Natural killer cell (primary cell): ENCODE measurements at regions of chr19 and their contacts with region 1.

Region 1: DNA sequence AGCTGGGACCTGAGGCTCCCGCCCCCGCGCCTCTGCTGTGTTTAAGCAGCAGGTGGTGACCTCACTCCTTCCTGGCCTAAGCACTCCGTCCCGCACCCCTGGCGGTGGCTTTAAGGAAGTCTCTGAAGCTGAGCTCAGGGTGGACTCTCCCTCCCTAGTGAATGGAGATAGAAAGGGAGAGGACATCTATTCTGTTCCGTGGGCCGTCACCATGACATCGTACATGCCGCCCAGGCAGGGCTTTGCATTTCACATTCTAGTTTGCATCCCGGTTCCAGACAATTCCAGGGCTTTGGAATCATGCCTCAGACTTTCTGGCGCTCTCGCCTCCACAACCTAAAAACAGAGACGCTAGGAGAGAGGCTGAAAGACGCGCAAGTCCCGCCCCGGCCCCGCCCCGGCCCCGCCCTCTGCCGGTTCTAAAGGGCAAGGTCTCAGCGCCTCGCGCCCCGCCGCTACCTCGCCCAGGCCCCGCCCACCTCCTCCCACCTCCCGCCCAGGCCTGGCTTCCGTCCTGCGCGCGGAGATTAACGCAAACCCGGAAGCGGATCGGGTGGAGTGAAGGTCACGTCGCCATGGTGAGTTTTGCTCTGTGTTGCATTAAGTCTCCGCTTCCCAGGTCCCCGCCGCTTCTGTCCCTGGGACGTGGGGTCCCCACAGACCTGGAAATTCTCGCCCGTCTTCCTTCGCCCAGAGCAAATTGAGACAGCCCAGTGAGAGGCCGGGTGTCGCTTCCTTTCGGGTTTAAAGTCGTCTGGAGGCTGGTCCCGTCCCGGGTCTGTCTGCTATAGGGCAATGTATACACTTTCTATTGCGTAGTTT is at the start of gene ZNF808:
- DNase-seq: peak; percentile 88 to 96
- ATAC-seq: peak; percentile 93 to 99 (median 94)
- H3K4me3 ChIP-seq: peak within 1 kb of the TSS; percentile 84
- H3K4me3 Mint-ChIP-seq: peak within 1 kb of the TSS; percentile 99
- H3K27ac ChIP-seq: peak within 1 kb of the TSS; percentile 88
- H3K27ac Mint-ChIP-seq: peak within 1 kb of the TSS; percentile 95 to 99
- H3K4me1 ChIP-seq: peaks cover 22% of the 10 kb centered on the region
- H3K4me1 Mint-ChIP-seq: peaks cover 21 to 22% of the 10 kb centered on the region in 2 donors
- H3K27me3 ChIP-seq: no peaks in the 10 kb centered on the region
- H3K27me3 Mint-ChIP-seq: no peaks in the 10 kb centered on the region
- CTCF ChIP-seq: peak; percentile 52
- total RNA-seq, gene ZNF808: 43.8 to 69.1 (median 49.5) TPM

Region 2: DNA sequence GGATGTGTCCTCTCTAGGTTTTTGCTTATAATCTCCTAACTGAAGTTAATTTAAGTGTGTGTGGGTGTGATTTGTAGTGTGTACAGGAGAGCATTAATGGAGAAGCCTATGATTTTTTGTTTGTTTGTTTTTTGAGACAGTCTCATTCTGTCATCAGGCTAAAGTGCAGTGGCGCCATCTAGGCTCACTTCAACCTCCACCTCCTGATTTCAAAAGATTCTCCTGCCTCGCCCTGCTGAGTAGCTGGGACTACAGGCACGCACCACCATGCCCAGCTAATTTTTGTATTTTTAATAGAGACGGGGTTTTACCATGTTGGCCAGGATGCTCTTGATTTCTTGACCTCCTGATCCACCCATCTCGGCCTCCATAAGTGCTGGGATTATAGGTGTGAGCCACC is 63.4 kb after region 1 on chr19:
- intact Hi-C with region 1: no loop called
- DNase-seq: peak in 1 of 2 donors; percentile 28
- ATAC-seq: no peak
- H3K4me3 ChIP-seq: no peak overlapping the region
- H3K4me3 Mint-ChIP-seq: no peak overlapping the region
- H3K27ac ChIP-seq: no peak overlapping the region
- H3K27ac Mint-ChIP-seq: peak overlapping the region in 1 of 2 donors; percentile 42
- H3K4me1 ChIP-seq: no peaks in the 10 kb centered on the region
- H3K4me1 Mint-ChIP-seq: peaks cover 0 to 9% of the 10 kb centered on the region in 2 donors
- H3K27me3 ChIP-seq: no peaks in the 10 kb centered on the region
- H3K27me3 Mint-ChIP-seq: no peaks in the 10 kb centered on the region
- CTCF ChIP-seq: no peak

Region 3: GRCh38 chr19:52601025-52601973 is 74.0 kb after region 1 on chr19:
- intact Hi-C with region 1: loop called (anchors 5 kb)
- DNase-seq: peak; percentile 92 to 94
- ATAC-seq: peak; percentile 99
- H3K4me3 ChIP-seq: peak overlapping the region; percentile 75
- H3K4me3 Mint-ChIP-seq: peak overlapping the region; percentile 96
- H3K27ac ChIP-seq: peak overlapping the region; percentile 56
- H3K27ac Mint-ChIP-seq: peak overlapping the region; percentile 39 to 83
- H3K4me1 ChIP-seq: peaks cover 21% of the 10 kb centered on the region
- H3K4me1 Mint-ChIP-seq: peaks cover 13 to 28% of the 10 kb centered on the region in 2 donors
- H3K27me3 ChIP-seq: no peaks in the 10 kb centered on the region
- H3K27me3 Mint-ChIP-seq: no peaks in the 10 kb centered on the region
- CTCF ChIP-seq: peak; percentile 57